ENCODE measurements at regions of chr5 and their contacts with region 1.

Region 1: DNA sequence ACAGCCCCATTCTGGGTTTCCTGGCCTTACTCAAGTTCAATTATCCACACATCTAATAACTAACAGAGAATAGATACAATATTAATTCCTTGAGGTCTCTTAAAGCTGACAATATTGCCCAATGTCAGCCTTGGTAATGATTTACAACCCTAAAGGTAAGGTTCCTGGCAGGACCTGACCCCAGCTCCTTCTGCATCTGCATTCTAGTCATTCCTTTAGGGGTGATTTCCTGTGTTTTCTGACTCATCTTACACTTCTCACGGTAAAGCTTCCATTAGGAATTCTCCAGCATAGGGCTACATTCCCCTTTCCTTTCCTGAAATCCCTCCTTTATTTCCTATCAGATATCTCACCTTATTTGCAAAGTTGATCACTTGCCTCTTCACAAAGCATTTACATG is 9.3 kb downstream of the HAVCR1 start:
- DNase-seq: no peak
- H3K4me3 ChIP-seq: no peak overlapping the region
- H3K27ac ChIP-seq: no peak overlapping the region
- H3K4me1 ChIP-seq: peaks cover 0 to 8% (median 1%) of the 10 kb centered on the region in 4 experiments; a peak in 3 of 7 replicates
- H3K27me3 ChIP-seq: no peaks in the 10 kb centered on the region
- CTCF ChIP-seq: no peak
- EP300 ChIP-seq: no peak
- POLR2A ChIP-seq: no peak
- RAD21 ChIP-seq: no peak

Region 2: DNA sequence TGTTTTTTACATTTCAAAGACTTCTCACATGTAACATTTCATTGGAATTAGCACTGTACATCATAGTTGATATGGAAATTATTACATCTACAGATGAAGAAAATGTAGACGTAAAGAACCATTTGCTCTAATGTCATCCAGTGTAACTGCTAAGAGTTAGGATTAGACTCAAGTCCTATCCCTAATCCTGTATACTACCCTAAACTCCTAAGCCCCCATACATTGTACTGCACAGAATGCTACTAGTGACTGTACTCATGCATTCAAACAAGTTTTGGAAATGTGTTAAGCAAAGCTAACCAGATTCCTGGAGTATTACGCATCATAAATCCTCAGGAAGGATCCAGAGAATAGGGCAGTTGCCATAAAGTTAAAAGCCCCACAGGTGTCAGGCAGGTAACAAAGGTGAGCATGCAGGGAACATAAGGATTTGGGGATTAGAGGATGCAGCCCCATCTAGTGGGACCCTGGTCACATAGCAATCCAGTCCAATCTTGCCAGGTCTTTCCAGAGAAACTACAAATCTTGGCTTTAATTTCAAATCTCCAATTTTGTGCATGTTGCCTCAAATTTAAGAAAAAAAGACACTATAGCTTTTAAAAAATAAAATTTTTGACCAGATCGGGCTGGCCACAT is 22.7 kb before region 1 on chr5:
- CTCF ChIA-PET with region 1: interaction called, 10 read pairs
- POLR2A ChIA-PET with region 1: no interaction called
- DNase-seq: peak; percentile 38 to 52
- H3K4me3 ChIP-seq: no peak overlapping the region
- H3K27ac ChIP-seq: no peak overlapping the region
- H3K4me1 ChIP-seq: no peaks in the 10 kb centered on the region
- H3K27me3 ChIP-seq: no peaks in the 10 kb centered on the region; a peak in 1 of 7 replicates
- CTCF ChIP-seq: peak; percentile 51 to 90 (median 85)
- EP300 ChIP-seq: 0 out of 3 replicates have a peak, but pooled peaks of 1 of the 2 experiments have one; percentile 32
- POLR2A ChIP-seq: no peak
- RAD21 ChIP-seq: peak; percentile 86 to 91

Region 3: GRCh38 chr5:157069949-157070348 is 20.3 kb after region 1 on chr5:
- CTCF ChIA-PET with region 1: no interaction called
- POLR2A ChIA-PET with region 1: no interaction called
- DNase-seq: no peak
- H3K4me3 ChIP-seq: no peak overlapping the region
- H3K27ac ChIP-seq: no peak overlapping the region
- H3K4me1 ChIP-seq: no peaks in the 10 kb centered on the region
- H3K27me3 ChIP-seq: no peaks in the 10 kb centered on the region
- CTCF ChIP-seq: peak in 1 of 3 experiments; percentile 27; a peak in 1 of 4 replicates
- EP300 ChIP-seq: no peak
- POLR2A ChIP-seq: no peak
- RAD21 ChIP-seq: no peak; a peak in 1 of 4 replicates

Region 4: GRCh38 chr5:157120102-157120501 is 70.5 kb after region 1 on chr5:
- CTCF ChIA-PET with region 1: no interaction called
- POLR2A ChIA-PET with region 1: no interaction called
- DNase-seq: no peak
- H3K4me3 ChIP-seq: no peak overlapping the region
- H3K27ac ChIP-seq: no peak overlapping the region
- H3K4me1 ChIP-seq: no peaks in the 10 kb centered on the region; a peak in 1 of 7 replicates
- H3K27me3 ChIP-seq: no peaks in the 10 kb centered on the region
- CTCF ChIP-seq: no peak
- EP300 ChIP-seq: no peak
- POLR2A ChIP-seq: no peak
- RAD21 ChIP-seq: no peak

Region 5: DNA sequence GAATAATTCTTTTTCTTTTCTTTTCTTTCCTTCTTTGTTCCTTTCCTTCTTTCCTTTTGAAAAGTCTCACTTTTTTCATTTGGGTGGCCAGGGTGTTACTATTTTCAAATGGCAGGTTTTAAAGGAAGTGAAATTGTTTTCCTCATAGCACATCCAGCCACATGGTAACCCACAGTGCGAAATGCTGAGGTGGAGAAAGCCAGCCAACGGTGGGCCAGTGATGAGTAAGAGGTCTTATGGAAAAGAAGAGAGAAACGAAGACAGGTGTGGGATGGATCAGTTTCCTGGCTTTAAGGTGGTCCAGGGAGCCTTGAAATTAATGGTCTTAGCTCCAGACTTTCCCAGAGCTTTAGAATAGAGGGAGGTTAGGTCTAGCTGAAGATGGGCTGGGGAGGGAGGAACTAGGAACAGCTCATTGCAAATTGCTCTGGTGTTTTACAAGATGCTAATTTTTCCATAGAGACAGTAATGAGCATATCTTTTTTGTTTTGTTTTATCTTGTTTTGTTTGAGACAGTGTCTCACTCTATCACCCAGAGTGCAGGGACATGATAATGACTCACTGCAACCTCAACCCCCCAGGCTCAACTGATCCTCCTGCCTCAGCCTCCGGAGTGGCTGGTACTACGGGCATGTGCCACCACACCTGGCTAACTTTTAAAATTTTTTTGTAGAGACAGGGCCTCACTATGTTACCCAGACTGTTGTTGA is 148.8 kb after region 1 on chr5:
- CTCF ChIA-PET with region 1: no interaction called
- POLR2A ChIA-PET with region 1: no interaction called
- DNase-seq: no peak
- H3K4me3 ChIP-seq: no peak overlapping the region
- H3K27ac ChIP-seq: no peak overlapping the region
- H3K4me1 ChIP-seq: no peaks in the 10 kb centered on the region
- H3K27me3 ChIP-seq: no peaks in the 10 kb centered on the region
- CTCF ChIP-seq: no peak
- EP300 ChIP-seq: no peak
- POLR2A ChIP-seq: no peak
- RAD21 ChIP-seq: no peak

Region 6: GRCh38 chr5:157743163-157744050 is 693.8 kb after region 1 on chr5 and contains the start of gene LSM11:
- CTCF ChIA-PET with region 1: no interaction called
- POLR2A ChIA-PET with region 1: no interaction called
- DNase-seq: peak; percentile 69 to 98
- H3K4me3 ChIP-seq: peak within 1 kb of the TSS; percentile 49 to 85 (median 70)
- H3K27ac ChIP-seq: no peak within 1 kb of the TSS
- H3K4me1 ChIP-seq: peaks cover 0 to 7% (median 0%) of the 10 kb centered on the region in 4 experiments; a peak in 3 of 7 replicates
- H3K27me3 ChIP-seq: peaks cover 0 to 13% (median 7%) of the 10 kb centered on the region in 4 experiments; a peak in 5 of 7 replicates
- CTCF ChIP-seq: peak; percentile 97 to 100 (median 99)
- EP300 ChIP-seq: peak in 1 of 2 experiments; percentile 37; a peak in 1 of 3 replicates
- POLR2A ChIP-seq: peak in 1 of 2 experiments; percentile 19; a peak in 1 of 3 replicates
- RAD21 ChIP-seq: peak; percentile 86 to 92
- total RNA-seq, gene LSM11: 3.4 and 3.9 TPM in 2 replicates